ENCODE measurements at regions of chr6 and their contacts with region 1.

Region 1: GRCh38 chr6:37018198-37019064 is 13.0 kb downstream of the FGD2 start:
- DNase-seq: peak; percentile 94 to 97
- ATAC-seq: peak; percentile 94
- H3K4me3 ChIP-seq: no peak overlapping the region
- H3K27ac ChIP-seq: no peak overlapping the region
- H3K4me1 ChIP-seq: no peaks in the 10 kb centered on the region
- H3K27me3 ChIP-seq: no peaks in the 10 kb centered on the region

Region 2: DNA sequence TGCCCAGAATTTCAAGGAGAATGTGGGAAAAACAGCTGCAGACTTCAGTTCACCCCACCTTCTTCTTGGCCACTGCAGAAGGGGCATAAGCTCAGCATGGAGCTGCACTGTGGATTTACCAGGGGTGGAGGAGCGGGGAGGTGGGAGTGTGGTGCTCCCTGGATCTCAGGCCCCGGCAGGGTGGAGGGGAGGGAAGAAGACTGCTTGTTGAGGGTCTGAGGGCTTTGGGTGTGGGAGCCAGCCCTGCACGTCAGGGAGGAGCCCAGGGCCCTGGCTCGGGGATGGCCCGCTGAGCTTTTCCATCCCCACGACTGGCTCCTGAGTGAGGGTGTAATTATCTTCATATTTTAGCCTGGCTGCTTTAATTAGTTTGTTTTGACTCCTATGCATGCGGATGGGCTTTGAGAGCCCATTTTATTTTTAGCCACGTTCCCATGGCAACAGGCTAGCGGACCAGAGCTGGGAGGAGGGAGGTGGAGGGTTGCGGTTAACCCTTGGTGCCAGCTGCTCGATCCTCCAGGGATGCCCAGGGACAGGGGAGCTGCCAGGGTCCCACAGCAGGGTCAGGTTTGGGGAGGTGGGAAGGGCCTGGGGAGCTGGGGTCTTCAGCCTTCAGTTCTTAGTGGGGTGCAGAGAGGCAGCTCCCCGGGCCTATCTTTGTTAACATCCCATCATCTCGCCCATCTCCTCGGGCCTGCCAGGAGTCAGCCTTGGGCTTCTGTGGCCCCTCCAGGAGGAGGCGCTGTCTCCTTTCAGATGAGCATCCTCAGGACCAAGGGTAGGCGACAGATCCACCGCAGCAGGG is 252.6 kb before region 1 on chr6:
- intact Hi-C with region 1: loop called (anchors 2 to 5 kb)
- DNase-seq: peak; percentile 91 to 93
- ATAC-seq: peak; percentile 92
- H3K4me3 ChIP-seq: no peak overlapping the region
- H3K27ac ChIP-seq: no peak overlapping the region
- H3K4me1 ChIP-seq: no peaks in the 10 kb centered on the region
- H3K27me3 ChIP-seq: no peaks in the 10 kb centered on the region

Region 3: GRCh38 chr6:36800223-36801076 is 218.0 kb before region 1 on chr6:
- intact Hi-C with region 1: no loop called
- DNase-seq: no peak
- ATAC-seq: no peak
- H3K4me3 ChIP-seq: no peak overlapping the region
- H3K27ac ChIP-seq: no peak overlapping the region
- H3K4me1 ChIP-seq: no peaks in the 10 kb centered on the region
- H3K27me3 ChIP-seq: no peaks in the 10 kb centered on the region

Region 4: GRCh38 chr6:36885461-36886401 is 132.7 kb before region 1 on chr6 and contains the start of gene C6orf89:
- intact Hi-C with region 1: loop called (anchors 1 to 5 kb)
- DNase-seq: peak; percentile 99
- ATAC-seq: peak; percentile 100
- H3K4me3 ChIP-seq: peak within 1 kb of the TSS; percentile 20 to 62
- H3K27ac ChIP-seq: peak within 1 kb of the TSS; percentile 57 to 91
- H3K4me1 ChIP-seq: peaks cover 0 to 2% of the 10 kb centered on the region in 2 donors
- H3K27me3 ChIP-seq: no peaks in the 10 kb centered on the region
- total RNA-seq, gene C6orf89: 56.9 to 59.7 TPM

Region 5: GRCh38 chr6:37051138-37052026 is 33.0 kb after region 1 on chr6:
- intact Hi-C with region 1: no loop called
- DNase-seq: peak; percentile 93 to 98
- ATAC-seq: peak; percentile 88
- H3K4me3 ChIP-seq: no peak overlapping the region
- H3K27ac ChIP-seq: no peak overlapping the region
- H3K4me1 ChIP-seq: no peaks in the 10 kb centered on the region
- H3K27me3 ChIP-seq: no peaks in the 10 kb centered on the region

Region 6: DNA sequence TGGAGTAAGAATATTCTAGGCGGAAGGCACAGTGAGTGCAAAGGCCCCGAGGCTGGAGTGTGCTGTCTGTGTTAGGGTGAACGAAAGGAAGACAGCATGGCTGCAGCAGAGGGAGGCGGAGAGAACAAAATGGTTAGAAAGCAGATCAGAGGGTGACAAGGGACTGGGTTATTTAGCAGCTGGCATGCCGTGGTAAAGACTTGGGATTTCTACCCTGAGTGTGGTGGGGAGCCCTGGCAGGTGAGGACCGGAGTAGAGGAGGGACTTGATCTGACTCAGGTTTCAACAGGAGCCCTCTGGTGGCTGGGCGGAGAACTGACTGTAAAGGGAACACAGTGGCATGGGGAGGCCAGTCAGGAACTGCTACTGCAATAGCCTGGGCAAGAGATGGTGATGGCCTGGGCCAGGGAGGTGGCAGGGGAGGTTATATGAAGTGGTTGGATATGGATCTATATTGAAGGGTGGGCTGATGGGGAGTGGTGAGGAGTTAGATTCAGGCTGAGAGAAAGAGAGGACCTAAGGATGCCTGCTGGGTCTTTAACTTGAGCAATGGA is 189.5 kb after region 1 on chr6:
- intact Hi-C with region 1: loop called in 1 of 2 experiments (anchors 1 kb)
- DNase-seq: peak; percentile 91 to 92
- ATAC-seq: peak; percentile 69
- H3K4me3 ChIP-seq: no peak overlapping the region
- H3K27ac ChIP-seq: no peak overlapping the region
- H3K4me1 ChIP-seq: no peaks in the 10 kb centered on the region
- H3K27me3 ChIP-seq: no peaks in the 10 kb centered on the region

Region 7: GRCh38 chr6:37499433-37500293 is 481.2 kb after region 1 on chr6 and contains the start of gene CCDC167:
- intact Hi-C with region 1: no loop called
- DNase-seq: peak; percentile 97 to 98
- ATAC-seq: peak; percentile 97
- H3K4me3 ChIP-seq: peak within 1 kb of the TSS; percentile 37 to 48
- H3K27ac ChIP-seq: no peak within 1 kb of the TSS
- H3K4me1 ChIP-seq: no peaks in the 10 kb centered on the region
- H3K27me3 ChIP-seq: no peaks in the 10 kb centered on the region
- total RNA-seq, gene CCDC167: 11.5 to 13.9 TPM